ENCODE measurements at regions of chr10 and their contacts with region 1.

Region 1: GRCh38 chr10:49512121-49512809 is 26.7 kb downstream of the ERCC6 start:
- DNase-seq: no peak
- H3K4me3 ChIP-seq: no peak overlapping the region
- CTCF ChIP-seq: peak; percentile 61

Region 2: DNA sequence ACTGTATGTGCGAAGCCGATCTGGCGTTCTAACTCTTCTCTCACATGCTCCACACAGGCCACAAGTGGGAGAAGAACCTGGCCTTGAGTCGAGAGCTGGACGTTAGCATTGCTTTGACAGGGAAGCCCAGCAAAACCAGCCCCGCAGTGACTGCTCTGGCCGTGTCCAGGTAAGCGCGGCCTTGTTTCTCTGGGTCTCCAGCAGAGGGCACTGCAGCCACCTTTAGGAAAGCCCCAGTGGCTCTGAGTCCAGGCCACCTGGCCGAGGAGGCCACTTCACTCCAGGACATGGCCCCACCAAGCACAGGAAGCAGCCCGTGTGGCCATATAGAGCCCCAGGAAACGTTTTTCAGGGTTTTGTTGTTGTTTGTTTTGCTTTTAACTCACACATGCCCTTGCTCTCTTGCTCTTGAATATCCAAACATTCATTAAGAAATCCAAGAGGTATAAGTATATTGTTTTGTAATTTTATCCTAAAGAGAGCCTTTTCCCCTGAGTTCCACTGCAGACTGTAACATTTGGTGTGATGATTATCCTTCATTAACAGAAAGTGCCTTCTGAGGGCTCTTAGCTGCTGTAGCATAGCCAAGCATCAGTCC is 530.9 kb before region 1 on chr10:
- in situ Hi-C with region 1: loop called (anchors 5 kb)
- DNase-seq: peak; percentile 19
- H3K4me3 ChIP-seq: no peak overlapping the region
- CTCF ChIP-seq: peak; percentile 88

Region 3: GRCh38 chr10:49446031-49446430 is 66.2 kb before region 1 on chr10:
- in situ Hi-C with region 1: loop called (anchors 5 kb)
- DNase-seq: no peak
- H3K4me3 ChIP-seq: no peak overlapping the region
- CTCF ChIP-seq: no peak

Region 4: GRCh38 chr10:49562893-49563292 is 50.6 kb after region 1 on chr10:
- in situ Hi-C with region 1: no loop called
- DNase-seq: no peak
- H3K4me3 ChIP-seq: no peak overlapping the region
- CTCF ChIP-seq: no peak